ENCODE measurements at regions of chr2 and their contacts with region 1.

Region 1: DNA sequence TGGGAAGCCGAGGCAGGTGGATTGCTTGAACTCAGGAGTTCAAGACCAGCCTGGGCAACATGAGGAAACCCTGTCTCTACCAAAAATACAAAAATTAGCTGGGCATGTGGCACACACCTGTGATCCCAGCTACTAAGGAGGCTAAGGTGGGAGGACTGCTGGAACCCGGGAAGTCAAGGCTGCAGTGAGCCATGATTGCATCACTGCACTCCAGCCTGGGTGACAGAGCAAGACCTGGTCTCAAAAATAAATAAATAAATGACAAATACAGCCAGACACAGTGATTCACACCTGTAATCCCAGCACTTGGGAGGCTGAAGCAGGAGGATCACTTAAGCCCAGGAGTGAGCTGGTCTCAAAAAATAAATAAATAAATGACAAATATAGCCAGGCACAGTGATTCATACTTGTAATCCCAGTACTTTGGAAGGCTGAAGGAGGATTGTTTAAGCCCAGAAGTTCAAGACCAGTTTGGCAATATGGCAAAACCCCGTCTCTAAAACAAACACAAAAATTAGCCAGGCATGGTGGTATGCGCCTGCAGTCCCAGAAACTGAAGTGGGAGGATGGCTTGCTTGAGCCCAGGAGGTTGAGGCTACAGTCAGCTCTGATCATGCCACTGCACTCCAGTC is 6.2 kb downstream of the KANSL3 start:
- DNase-seq: no peak
- H3K4me3 Mint-ChIP-seq: no peak overlapping the region
- H3K27ac Mint-ChIP-seq: no peak overlapping the region
- H3K4me1 Mint-ChIP-seq: peaks cover 43% of the 10 kb centered on the region
- H3K27me3 Mint-ChIP-seq: no peaks in the 10 kb centered on the region

Region 2: GRCh38 chr2:96618604-96619283 is 13.2 kb before region 1 on chr2:
- CTCF ChIA-PET with region 1: interaction called, 6 read pairs
- POLR2A ChIA-PET with region 1: interaction called, 58 read pairs
- DNase-seq: no peak
- H3K4me3 Mint-ChIP-seq: no peak overlapping the region
- H3K27ac Mint-ChIP-seq: peak overlapping the region; percentile 7
- H3K4me1 Mint-ChIP-seq: peaks cover 49% of the 10 kb centered on the region
- H3K27me3 Mint-ChIP-seq: no peaks in the 10 kb centered on the region